ENCODE measurements at regions of chr1 and their contacts with region 1.

Region 1: DNA sequence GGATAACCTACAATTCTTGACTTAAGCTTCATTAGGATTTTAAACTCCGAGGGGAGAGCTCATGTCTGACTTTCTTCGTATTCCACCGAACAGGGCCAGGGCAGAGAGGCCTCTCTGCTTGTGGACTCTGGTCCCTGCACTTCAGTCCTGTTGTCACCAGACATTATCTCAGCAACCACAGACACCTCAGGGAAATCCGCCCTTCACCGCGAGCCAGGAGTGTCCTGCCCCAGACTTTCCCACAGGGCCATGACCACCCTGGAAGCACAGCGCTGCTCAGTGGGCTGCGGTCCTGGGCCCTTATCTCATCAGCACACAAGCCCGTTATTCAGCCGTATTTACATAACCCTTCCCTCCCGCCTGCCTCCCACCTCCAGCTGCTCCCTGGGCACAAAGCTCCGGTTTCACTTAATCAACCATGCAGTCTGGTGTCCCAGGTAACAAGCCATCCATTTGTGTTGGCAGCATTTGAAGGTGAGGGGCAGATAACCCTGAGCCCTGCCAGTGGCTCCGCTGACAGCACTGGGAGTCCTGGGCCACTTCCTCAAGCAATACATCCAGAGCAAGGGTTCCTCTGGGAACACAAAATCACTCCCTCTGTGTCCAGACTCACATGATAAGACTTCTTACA is 122.8 kb upstream of the RAB4A start:
- DNase-seq: no peak
- H3K4me3 ChIP-seq: no peak overlapping the region
- H3K27ac ChIP-seq: no peak overlapping the region
- H3K4me1 ChIP-seq: no peaks in the 10 kb centered on the region
- H3K27me3 ChIP-seq: no peaks in the 10 kb centered on the region
- CTCF ChIP-seq: no peak
- POLR2A ChIP-seq: no peak

Region 2: GRCh38 chr1:230621324-230622030 is 1473.3 kb after region 1 on chr1:
- intact Hi-C with region 1: loop called (anchors 5 kb)
- DNase-seq: no peak
- H3K4me3 ChIP-seq: no peak overlapping the region
- H3K27ac ChIP-seq: no peak overlapping the region
- H3K4me1 ChIP-seq: no peaks in the 10 kb centered on the region
- H3K27me3 ChIP-seq: no peaks in the 10 kb centered on the region
- CTCF ChIP-seq: no peak
- POLR2A ChIP-seq: no peak